Panc1 (cell line): ENCODE measurements at regions of chr1 and their contacts with region 1.

Region 1: DNA sequence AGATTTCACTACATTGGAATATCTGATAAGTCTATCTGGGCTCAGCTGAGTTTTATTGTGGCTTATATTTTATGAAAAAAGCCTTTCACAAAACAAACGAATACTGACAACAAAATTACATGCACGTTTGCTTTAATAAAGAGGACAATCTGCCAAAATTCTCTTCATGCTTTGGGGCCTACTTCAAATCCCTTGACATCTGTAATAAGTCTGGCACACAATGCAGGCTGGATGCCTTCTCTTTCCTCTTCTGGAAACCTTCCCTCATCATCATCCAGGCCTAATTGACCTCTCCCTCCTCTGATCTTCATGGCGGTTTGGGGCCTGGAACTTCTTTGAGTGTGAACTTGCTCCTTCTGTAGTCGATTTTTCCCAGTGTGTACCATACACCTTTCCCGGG is 70.3 kb downstream of the MAP10 start:
- DNase-seq: no peak
- ATAC-seq: no peak
- H3K4me3 ChIP-seq: no peak overlapping the region
- H3K27ac ChIP-seq: no peak overlapping the region
- H3K4me1 ChIP-seq: no peaks in the 10 kb centered on the region
- H3K27me3 ChIP-seq: no peaks in the 10 kb centered on the region
- CTCF ChIP-seq: no peak

Region 2: GRCh38 chr1:232726048-232726779 is 149.3 kb before region 1 on chr1:
- CTCF ChIA-PET with region 1: no interaction called
- POLR2A ChIA-PET with region 1: no interaction called
- in situ Hi-C with region 1: no loop called
- intact Hi-C with region 1: no loop called
- DNase-seq: no peak
- ATAC-seq: 0 out of 2 replicates have a peak, but pooled peaks have one; percentile 21
- H3K4me3 ChIP-seq: no peak overlapping the region
- H3K27ac ChIP-seq: no peak overlapping the region
- H3K4me1 ChIP-seq: no peaks in the 10 kb centered on the region
- H3K27me3 ChIP-seq: no peaks in the 10 kb centered on the region
- CTCF ChIP-seq: no peak

Region 3: GRCh38 chr1:232810856-232811255 is 64.7 kb before region 1 on chr1:
- CTCF ChIA-PET with region 1: no interaction called
- POLR2A ChIA-PET with region 1: no interaction called
- in situ Hi-C with region 1: no loop called
- intact Hi-C with region 1: loop called (anchors 10 kb)
- DNase-seq: no peak
- ATAC-seq: no peak
- H3K4me3 ChIP-seq: no peak overlapping the region
- H3K27ac ChIP-seq: no peak overlapping the region
- H3K4me1 ChIP-seq: no peaks in the 10 kb centered on the region
- H3K27me3 ChIP-seq: peaks cover 3% of the 10 kb centered on the region
- CTCF ChIP-seq: no peak